Psoas muscle (tissue), 8 donors: ENCODE measurements at regions of chr1 and their contacts with region 1.

Region 1: DNA sequence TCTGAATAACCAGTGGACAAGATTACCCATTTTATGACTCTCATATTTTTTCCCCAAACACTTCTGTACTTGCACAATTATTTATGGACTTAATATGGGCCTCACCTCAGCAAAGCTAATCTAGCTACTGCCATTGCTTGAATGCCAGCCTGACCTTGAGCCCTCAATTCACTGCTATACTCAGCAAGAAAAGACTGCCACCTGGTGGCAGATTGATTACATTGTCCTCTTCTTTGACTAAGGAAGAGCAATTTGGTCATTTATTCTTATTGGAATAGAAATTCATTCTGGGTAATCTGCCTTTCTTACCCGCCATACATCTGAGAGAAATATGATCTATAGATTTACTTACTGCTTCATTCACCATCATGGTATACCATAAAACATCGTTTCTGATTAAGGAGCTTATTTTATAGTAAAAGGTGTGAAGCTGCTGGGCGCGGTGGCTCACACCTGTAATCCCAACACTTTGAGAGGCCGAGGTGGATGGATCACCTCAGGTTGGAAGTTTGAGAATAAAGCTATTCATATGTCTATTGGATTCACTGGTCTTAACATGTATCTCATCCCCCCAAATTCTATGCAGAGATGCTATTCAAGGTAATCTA is 32.9 kb upstream of the DIPK1A start:
- DNase-seq: no peak
- ATAC-seq: peak; percentile 90 to 97 (median 92)
- H3K4me3 ChIP-seq: no peak overlapping the region
- H3K27ac ChIP-seq: no peak overlapping the region
- H3K4me1 ChIP-seq: peaks cover 4% of the 10 kb centered on the region
- H3K27me3 ChIP-seq: no peaks in the 10 kb centered on the region
- CTCF ChIP-seq: peak; percentile 92

Region 2: GRCh38 chr1:92960395-92961130 is 33.6 kb before region 1 on chr1:
- intact Hi-C with region 1: loop called (anchors 2 to 5 kb)
- DNase-seq: peak; percentile 43 to 64
- ATAC-seq: peak; percentile 78 to 85 (median 80)
- H3K4me3 ChIP-seq: peak overlapping the region; percentile 85
- H3K27ac ChIP-seq: peak overlapping the region; percentile 91
- H3K4me1 ChIP-seq: peaks cover 30% of the 10 kb centered on the region
- H3K27me3 ChIP-seq: no peaks in the 10 kb centered on the region
- CTCF ChIP-seq: peak; percentile 65

Region 3: GRCh38 chr1:93324486-93325464 is 330.6 kb after region 1 on chr1:
- intact Hi-C with region 1: no loop called
- DNase-seq: no peak
- ATAC-seq: no peak
- H3K4me3 ChIP-seq: no peak overlapping the region
- H3K27ac ChIP-seq: no peak overlapping the region
- H3K4me1 ChIP-seq: no peaks in the 10 kb centered on the region
- H3K27me3 ChIP-seq: no peaks in the 10 kb centered on the region
- CTCF ChIP-seq: no peak